Naive thymus-derived CD4-positive, alpha-beta T cell (primary cell): ENCODE measurements at regions of chr11 and their contacts with region 1.

Region 1: DNA sequence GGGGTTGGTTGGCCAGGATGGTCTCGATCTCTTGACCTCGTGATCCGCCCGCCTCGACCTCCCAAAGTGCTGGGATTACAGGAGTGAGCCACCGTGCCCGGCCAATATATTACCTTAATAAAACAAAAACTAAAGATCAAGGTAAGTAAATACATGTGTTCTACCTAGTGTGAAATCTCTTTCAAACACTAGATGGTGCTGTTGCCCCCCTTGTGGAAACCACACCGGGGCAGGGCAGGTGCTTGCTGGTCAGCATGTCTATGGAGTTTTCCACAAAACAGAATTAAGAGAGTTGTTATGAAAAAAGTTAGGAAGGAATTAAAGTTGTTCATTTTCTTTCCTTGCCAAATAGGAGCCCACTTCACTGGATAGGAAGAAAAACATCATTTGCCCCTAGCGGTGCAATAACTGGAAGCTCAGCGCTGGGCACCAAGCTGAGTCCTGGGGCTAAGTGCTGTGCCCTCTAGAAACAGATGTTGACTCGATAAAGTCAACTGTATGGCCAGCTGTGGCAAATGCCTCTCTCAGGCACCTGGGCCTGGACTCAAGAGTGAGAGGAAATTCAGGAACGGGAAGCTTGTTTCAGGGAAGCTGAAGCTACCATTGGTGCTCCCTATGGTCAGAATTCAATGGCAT is 6.3 kb upstream of the KCNJ5 start:
- DNase-seq: peak in 8 of 9 donors; percentile 41 to 69 (median 60)
- ATAC-seq: peak; percentile 79
- H3K4me3 ChIP-seq: no peak overlapping the region
- H3K4me3 Mint-ChIP-seq: no peak overlapping the region
- H3K27ac ChIP-seq: no peak overlapping the region
- H3K27ac Mint-ChIP-seq: no peak overlapping the region
- H3K4me1 ChIP-seq: no peaks in the 10 kb centered on the region
- H3K4me1 Mint-ChIP-seq: peaks cover 0 to 8% (median 3%) of the 10 kb centered on the region in 7 donors
- H3K27me3 ChIP-seq: peaks cover 7 to 9% of the 10 kb centered on the region in 2 donors
- H3K27me3 Mint-ChIP-seq: peaks cover 54 to 78% (median 73%) of the 10 kb centered on the region in 5 donors

Region 2: DNA sequence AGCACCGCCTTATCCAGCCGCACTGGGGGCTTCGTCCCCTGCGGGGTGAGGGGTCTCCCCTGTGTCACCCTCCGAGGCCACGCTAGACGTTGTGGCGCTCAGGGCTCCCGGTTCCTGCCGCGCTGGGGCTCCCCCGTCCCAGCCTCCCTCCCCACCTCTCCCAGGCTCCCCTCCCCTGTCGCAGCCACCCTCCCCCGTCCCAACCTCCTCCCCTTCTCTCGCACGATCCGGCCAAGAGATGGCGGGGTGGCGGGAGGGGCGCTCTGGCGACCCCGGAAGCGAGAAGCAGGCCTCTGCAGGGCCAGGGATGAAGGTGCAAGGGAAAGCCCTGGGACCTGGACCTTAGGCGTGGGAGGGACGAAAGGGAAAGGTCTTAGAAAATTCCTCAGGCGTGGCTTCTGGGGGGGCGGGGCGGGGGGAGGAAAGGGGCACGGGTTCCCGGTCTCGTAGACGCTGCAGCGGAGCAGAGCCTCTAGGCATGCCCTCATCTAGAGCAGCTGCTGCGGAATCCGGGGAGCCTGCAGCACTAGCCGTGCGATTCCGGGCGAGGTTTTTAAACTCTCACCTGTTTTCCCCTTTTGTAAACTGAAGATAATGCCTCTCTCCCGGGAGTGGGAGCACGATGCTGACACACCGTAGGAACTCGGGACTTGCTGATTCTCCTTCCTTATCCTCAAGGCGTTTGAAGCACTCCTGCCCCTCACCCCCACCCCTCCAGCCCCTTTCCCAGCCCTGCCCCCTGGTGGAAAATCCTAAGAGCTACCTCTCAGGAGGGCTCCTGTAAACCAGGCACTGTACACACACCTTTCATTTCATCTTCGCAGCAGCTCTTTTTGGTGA is 20.7 kb after region 1 on chr11:
- CTCF ChIA-PET with region 1: interaction called, 11 read pairs
- POLR2A ChIA-PET with region 1: interaction called, 4 read pairs
- intact Hi-C with region 1: loop called (anchors 1 kb)
- DNase-seq: peak in 7 of 9 donors; percentile 27 to 51 (median 46)
- ATAC-seq: peak; percentile 73
- H3K4me3 ChIP-seq: peak overlapping the region; percentile 62
- H3K4me3 Mint-ChIP-seq: peak overlapping the region; percentile 79 to 89 (median 82)
- H3K27ac ChIP-seq: no peak overlapping the region
- H3K27ac Mint-ChIP-seq: peak overlapping the region in 2 of 9 donors; percentile 13 to 59
- H3K4me1 ChIP-seq: peaks cover 0 to 3% of the 10 kb centered on the region in 2 donors
- H3K4me1 Mint-ChIP-seq: peaks cover 7 to 24% (median 11%) of the 10 kb centered on the region in 7 donors
- H3K27me3 ChIP-seq: peaks cover 4 to 5% of the 10 kb centered on the region in 2 donors
- H3K27me3 Mint-ChIP-seq: peaks cover 8 to 88% (median 29%) of the 10 kb centered on the region in 5 donors

Region 3: GRCh38 chr11:128956401-128957201 is 71.8 kb after region 1 on chr11:
- CTCF ChIA-PET with region 1: interaction called, 64 read pairs
- POLR2A ChIA-PET with region 1: no interaction called
- intact Hi-C with region 1: loop called (anchors 1 kb)
- DNase-seq: peak in 6 of 9 donors; percentile 10 to 48 (median 34)
- ATAC-seq: peak; percentile 60
- H3K4me3 ChIP-seq: no peak overlapping the region
- H3K4me3 Mint-ChIP-seq: peak overlapping the region in 4 of 10 donors; percentile 15 to 52 (median 30)
- H3K27ac ChIP-seq: no peak overlapping the region
- H3K27ac Mint-ChIP-seq: no peak overlapping the region
- H3K4me1 ChIP-seq: no peaks in the 10 kb centered on the region
- H3K4me1 Mint-ChIP-seq: peaks cover 2 to 6% (median 4%) of the 10 kb centered on the region in 7 donors
- H3K27me3 ChIP-seq: no peaks in the 10 kb centered on the region
- H3K27me3 Mint-ChIP-seq: peaks cover 0 to 33% (median 8%) of the 10 kb centered on the region in 5 donors

Region 4: GRCh38 chr11:129331871-129332274 is 447.1 kb after region 1 on chr11:
- CTCF ChIA-PET with region 1: no interaction called
- POLR2A ChIA-PET with region 1: no interaction called
- intact Hi-C with region 1: loop called (anchors 1 kb)
- DNase-seq: peak; percentile 18 to 65 (median 45)
- ATAC-seq: peak; percentile 77
- H3K4me3 ChIP-seq: no peak overlapping the region
- H3K4me3 Mint-ChIP-seq: peak overlapping the region in 1 of 10 donors; percentile 34
- H3K27ac ChIP-seq: no peak overlapping the region
- H3K27ac Mint-ChIP-seq: no peak overlapping the region
- H3K4me1 ChIP-seq: no peaks in the 10 kb centered on the region
- H3K4me1 Mint-ChIP-seq: peaks cover 0 to 8% (median 3%) of the 10 kb centered on the region in 7 donors
- H3K27me3 ChIP-seq: no peaks in the 10 kb centered on the region
- H3K27me3 Mint-ChIP-seq: peaks cover 0 to 6% (median 0%) of the 10 kb centered on the region in 5 donors